ENCODE measurements at regions of chr2 and their contacts with region 1.

Region 1: GRCh38 chr2:159712143-159712928 is at the start of gene MARCHF7:
- DNase-seq: peak; percentile 96
- H3K4me3 Mint-ChIP-seq: peak within 1 kb of the TSS; percentile 100
- H3K27ac Mint-ChIP-seq: peak within 1 kb of the TSS; percentile 100
- H3K4me1 Mint-ChIP-seq: peaks cover 16% of the 10 kb centered on the region
- H3K27me3 Mint-ChIP-seq: no peaks in the 10 kb centered on the region
- CTCF ChIP-seq: peak; percentile 67
- total RNA-seq, gene MARCHF7: 76.0 and 78.4 TPM in 2 replicates

Region 2: DNA sequence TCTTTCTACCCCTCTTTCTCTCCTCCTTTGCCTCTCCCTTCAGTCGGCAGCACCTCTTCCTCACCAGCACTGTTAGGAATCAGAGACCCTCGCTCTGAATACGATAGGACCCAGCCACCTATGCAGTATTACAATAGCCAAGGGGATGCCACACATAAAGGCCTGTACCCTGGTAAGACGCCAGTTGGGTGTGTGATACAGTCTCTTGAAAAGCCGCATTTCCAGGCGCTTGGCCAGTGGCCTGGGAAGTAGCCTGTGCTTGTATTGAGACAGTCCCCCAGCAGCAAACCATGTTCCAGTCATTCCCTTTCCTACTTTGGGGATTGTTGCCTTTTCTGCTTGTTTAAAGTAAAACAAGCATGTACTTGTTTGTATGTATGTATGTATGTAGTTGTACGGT is 1035.6 kb before region 1 on chr2:
- CTCF ChIA-PET with region 1: no interaction called
- POLR2A ChIA-PET with region 1: no interaction called
- intact Hi-C with region 1: no loop called
- DNase-seq: no peak
- H3K4me3 Mint-ChIP-seq: no peak overlapping the region
- H3K27ac Mint-ChIP-seq: no peak overlapping the region
- H3K4me1 Mint-ChIP-seq: no peaks in the 10 kb centered on the region
- H3K27me3 Mint-ChIP-seq: no peaks in the 10 kb centered on the region
- CTCF ChIP-seq: no peak

Region 3: DNA sequence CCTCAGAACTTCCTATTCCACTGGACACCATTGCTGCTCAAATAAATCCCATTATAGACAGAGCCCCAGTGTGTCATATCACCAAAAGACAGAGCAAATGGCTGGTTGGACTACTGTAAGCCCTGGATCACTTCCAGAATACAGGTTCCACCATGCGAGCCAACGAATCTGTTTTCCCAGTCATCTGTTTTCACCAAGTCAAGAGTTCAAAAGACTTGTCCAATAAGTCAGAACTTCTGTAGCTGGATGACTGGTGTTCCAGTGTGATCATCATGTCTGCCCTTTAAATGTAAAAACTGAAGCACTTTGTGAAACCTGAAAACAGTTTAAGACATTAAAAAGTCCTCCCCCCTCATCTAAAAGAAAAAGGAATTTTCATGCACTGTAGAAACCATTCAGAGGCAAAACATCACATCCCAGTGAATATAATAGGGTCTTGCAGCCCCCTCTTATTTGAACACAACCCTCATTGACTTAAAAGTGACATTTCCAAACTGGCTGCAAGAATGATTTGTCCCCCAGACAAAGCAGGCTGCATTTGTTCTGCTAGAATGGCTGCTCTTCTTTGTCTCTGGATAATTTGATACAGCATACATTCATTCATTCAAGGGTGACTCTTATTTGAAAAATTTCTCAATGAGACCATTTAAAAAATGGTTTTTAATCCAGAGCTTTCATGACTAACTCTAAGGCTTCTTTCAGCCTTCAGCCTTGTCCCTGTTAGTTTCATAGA is 808.5 kb before region 1 on chr2:
- CTCF ChIA-PET with region 1: no interaction called
- POLR2A ChIA-PET with region 1: no interaction called
- intact Hi-C with region 1: loop called (anchors 1 kb)
- DNase-seq: no peak
- H3K4me3 Mint-ChIP-seq: no peak overlapping the region
- H3K27ac Mint-ChIP-seq: no peak overlapping the region
- H3K4me1 Mint-ChIP-seq: no peaks in the 10 kb centered on the region
- H3K27me3 Mint-ChIP-seq: no peaks in the 10 kb centered on the region
- CTCF ChIP-seq: no peak

Region 4: DNA sequence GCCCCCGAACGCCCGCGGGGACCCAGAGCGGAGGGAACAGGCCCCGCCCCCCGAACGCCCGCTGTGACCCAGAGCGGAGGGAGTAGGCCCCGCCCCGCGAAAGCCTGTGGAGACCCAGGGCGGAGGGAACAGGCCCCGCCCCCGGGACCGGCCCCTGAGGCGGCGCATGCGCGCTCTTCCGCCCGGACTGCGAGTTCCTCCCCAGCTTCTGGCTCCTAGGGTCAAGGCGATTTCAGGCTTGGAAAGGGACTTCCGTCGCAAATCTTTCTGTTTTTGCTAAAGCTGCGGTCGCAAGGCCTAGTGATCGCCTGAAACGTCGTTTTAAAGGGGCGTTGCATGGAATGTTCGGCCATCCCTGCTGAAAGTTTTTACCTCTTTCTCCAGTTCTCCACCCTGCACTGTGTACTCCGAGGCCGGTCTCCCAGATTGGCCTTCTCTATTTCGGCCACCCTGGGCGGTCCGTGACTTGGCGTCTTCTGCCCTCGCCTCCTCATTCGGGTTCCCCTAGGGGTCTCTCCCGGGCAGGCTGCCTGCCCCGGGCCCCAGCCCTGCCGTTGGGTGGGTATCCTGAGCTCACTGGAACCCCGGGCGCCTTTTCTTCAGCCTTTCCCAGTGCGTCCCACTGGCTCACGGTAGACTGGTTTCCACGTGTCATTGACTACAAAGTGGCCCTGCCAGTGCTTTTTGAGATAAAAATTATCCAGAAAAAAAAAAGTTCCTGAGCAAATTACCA is 425.5 kb before region 1 on chr2:
- CTCF ChIA-PET with region 1: no interaction called
- POLR2A ChIA-PET with region 1: interaction called, 23 read pairs
- intact Hi-C with region 1: no loop called
- DNase-seq: peak; percentile 98
- H3K4me3 Mint-ChIP-seq: peak overlapping the region; percentile 85
- H3K27ac Mint-ChIP-seq: no peak overlapping the region
- H3K4me1 Mint-ChIP-seq: peaks cover 26% of the 10 kb centered on the region
- H3K27me3 Mint-ChIP-seq: no peaks in the 10 kb centered on the region
- CTCF ChIP-seq: no peak

Region 5: GRCh38 chr2:159516241-159516766 is 196.0 kb before region 1 on chr2:
- CTCF ChIA-PET with region 1: interaction called, 7 read pairs
- POLR2A ChIA-PET with region 1: interaction called, 139 read pairs
- intact Hi-C with region 1: loop called (anchors 1 kb)
- DNase-seq: peak; percentile 76
- H3K4me3 Mint-ChIP-seq: peak overlapping the region; percentile 76
- H3K27ac Mint-ChIP-seq: peak overlapping the region; percentile 92
- H3K4me1 Mint-ChIP-seq: peaks cover 20% of the 10 kb centered on the region
- H3K27me3 Mint-ChIP-seq: no peaks in the 10 kb centered on the region
- CTCF ChIP-seq: no peak

Region 6: DNA sequence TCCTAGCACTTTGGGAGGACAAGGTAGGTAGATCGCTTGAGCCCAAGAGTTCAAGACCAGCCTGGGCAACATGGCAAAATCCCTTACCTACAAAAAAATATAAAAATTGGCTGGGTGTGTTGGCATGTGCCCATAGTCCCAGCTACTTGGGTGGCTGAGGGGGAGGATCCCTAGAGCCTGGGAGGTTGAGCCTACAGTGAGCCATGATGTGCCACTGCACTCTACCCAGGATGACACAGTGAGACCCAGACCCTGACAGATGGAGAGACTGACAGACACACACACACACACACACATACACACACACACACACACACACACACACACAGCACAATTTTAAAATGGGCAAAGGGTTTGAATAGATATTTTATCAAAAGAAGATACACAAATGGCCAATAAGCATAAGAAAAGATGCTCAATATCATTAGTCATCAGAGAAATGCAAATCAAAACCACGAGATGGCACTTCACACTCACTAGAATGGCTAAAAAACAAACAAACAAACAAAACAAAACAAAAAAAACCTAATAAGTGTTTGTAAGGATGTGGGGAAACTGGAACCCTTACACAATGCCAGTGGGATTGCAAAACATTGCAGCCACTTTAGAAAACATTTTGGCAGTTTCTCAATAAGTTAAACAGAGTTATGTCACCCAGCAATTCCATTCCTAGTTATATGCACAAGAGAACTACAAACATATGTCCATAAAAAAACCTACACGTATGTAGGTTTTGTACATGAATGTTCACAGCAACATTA is 138.3 kb before region 1 on chr2:
- CTCF ChIA-PET with region 1: no interaction called
- POLR2A ChIA-PET with region 1: interaction called, 14 read pairs
- intact Hi-C with region 1: no loop called
- DNase-seq: peak; percentile 79
- H3K4me3 Mint-ChIP-seq: no peak overlapping the region
- H3K27ac Mint-ChIP-seq: no peak overlapping the region
- H3K4me1 Mint-ChIP-seq: peaks cover 6% of the 10 kb centered on the region
- H3K27me3 Mint-ChIP-seq: no peaks in the 10 kb centered on the region
- CTCF ChIP-seq: no peak

Region 7: DNA sequence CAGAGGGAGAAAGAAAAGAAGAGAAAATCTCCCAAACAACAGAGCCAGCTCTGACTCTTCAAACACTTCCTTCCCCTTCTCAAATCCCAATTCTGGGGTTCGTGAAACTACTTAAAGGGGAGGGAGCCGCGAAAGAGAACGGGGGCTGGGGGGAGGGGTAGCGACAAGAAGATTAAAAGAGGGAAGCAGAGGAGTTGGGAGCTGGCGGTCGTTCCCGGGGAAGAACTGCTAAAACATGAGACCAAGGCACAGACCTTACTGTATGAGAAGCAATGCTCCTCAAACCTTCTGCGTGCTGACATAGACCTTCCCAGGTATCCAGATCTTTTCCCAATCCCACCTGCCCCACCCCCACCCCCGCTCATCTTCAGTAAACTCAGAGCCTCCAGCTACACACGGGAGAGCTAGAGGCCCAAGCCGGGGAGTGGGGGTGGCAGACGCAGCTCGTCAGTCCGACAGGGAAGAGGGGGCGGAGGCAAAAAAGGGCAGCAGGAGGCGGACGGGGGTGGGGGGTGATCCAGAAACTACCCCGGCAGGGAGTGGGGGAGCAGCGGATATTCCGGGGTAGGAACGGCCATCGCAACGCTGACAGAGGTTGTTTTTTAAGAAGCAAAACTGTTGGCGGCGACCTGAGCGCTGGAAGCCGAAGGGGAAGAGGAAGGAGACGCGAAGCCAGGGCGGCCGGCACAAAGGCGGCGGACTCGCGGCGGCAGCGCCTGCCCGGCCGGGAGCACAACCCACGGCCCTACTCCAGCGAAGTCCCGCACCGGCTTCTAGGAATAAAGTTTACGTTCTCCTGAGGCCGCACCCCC is 97.0 kb before region 1 on chr2:
- CTCF ChIA-PET with region 1: interaction called, 3 read pairs
- POLR2A ChIA-PET with region 1: interaction called, 262 read pairs
- intact Hi-C with region 1: loop called (anchors 1 kb)
- DNase-seq: peak; percentile 95
- H3K4me3 Mint-ChIP-seq: peak overlapping the region; percentile 99
- H3K27ac Mint-ChIP-seq: peak overlapping the region; percentile 98
- H3K4me1 Mint-ChIP-seq: peaks cover 15% of the 10 kb centered on the region
- H3K27me3 Mint-ChIP-seq: no peaks in the 10 kb centered on the region
- CTCF ChIP-seq: no peak

Region 8: GRCh38 chr2:159725713-159726112 is 13.4 kb after region 1 on chr2:
- CTCF ChIA-PET with region 1: interaction called, 4 read pairs
- POLR2A ChIA-PET with region 1: interaction called, 30 read pairs
- intact Hi-C with region 1: no loop called
- DNase-seq: no peak
- H3K4me3 Mint-ChIP-seq: no peak overlapping the region
- H3K27ac Mint-ChIP-seq: no peak overlapping the region
- H3K4me1 Mint-ChIP-seq: peaks cover 7% of the 10 kb centered on the region
- H3K27me3 Mint-ChIP-seq: no peaks in the 10 kb centered on the region
- CTCF ChIP-seq: no peak

Measured in MCF 10A (cell line).